ENCODE measurements at regions of chr2 and their contacts with region 1.

Region 1: DNA sequence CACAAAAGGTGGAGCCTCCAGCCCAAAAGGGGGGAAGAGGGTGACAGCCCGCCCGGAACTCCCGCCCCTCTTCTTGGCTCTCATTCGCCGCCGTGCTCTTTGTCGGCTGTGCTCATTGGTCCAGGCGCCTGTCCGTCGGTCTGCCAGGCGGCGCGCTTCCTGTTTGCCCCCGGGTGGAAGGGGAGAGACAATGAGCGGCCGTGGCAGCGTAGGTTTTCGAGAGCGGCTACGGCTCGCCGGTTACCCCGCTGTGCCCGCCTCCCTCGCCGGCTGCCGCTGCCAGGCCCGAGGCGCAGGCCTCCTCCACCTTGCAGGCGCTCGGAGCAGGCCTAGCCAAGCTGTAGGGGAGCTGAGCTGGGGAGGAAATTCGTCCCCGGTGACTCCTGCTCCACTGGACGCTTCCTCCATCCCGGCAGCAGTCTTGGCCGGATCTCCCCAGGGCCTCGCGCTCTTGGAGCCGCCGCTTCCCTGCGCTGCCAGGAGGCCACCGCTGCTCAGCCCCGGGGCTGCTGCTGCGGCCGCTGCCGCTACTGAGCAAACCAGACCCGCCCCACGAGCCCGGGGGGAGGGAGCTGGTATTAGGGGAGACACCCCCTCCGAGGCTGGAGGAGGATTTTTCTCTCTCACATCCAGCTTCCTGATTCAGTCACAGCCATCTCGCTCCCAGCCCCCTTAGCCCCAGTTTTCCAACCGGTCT is at the start of gene SP3:
- DNase-seq: peak; percentile 99
- H3K4me3 ChIP-seq: peak within 1 kb of the TSS; percentile 81 to 99 (median 97)
- H3K27ac ChIP-seq: peak within 1 kb of the TSS; percentile 99 to 100 (median 100)
- H3K4me1 ChIP-seq: peaks cover 0 to 33% (median 27%) of the 10 kb centered on the region in 4 donors
- H3K27me3 ChIP-seq: no peaks in the 10 kb centered on the region
- CTCF ChIP-seq: peak in 1 of 4 experiments; percentile 8
- EP300 ChIP-seq: peak in 1 of 4 donors; percentile 10
- POLR2A ChIP-seq: peak; percentile 80 to 95
- total RNA-seq, gene SP3: 67.9 to 120 (median 107) TPM

Region 2: DNA sequence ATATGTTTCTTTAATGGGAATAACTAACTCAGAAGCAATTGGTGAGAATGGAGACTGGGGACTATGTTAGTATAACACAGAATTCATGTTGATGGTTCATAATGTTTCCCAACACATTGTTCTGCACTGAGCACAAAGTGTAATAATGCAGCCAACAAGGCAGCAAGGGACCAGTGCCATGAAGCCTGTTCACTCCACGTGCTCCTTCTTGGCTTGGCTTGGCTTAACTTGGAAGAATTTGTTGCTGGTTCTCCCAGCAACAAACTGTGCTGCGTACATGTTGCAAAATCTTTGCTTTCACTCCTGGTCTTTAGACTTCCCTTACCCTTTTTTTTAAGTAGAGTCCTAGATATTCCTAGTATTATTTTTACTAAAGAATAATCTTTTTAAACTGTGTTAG is 760.1 kb before region 1 on chr2:
- intact Hi-C with region 1: loop called (anchors 10 kb)
- DNase-seq: peak; percentile 97
- H3K4me3 ChIP-seq: no peak overlapping the region
- H3K27ac ChIP-seq: peak overlapping the region; percentile 74 to 85 (median 80)
- H3K4me1 ChIP-seq: peaks cover 0 to 86% (median 41%) of the 10 kb centered on the region in 4 donors
- H3K27me3 ChIP-seq: no peaks in the 10 kb centered on the region
- CTCF ChIP-seq: no peak
- EP300 ChIP-seq: peak; percentile 27 to 87 (median 78)
- POLR2A ChIP-seq: no peak

Region 3: GRCh38 chr2:173997269-173997668 is 31.8 kb after region 1 on chr2:
- intact Hi-C with region 1: loop called (anchors 2 kb)
- DNase-seq: peak; percentile 96
- H3K4me3 ChIP-seq: no peak overlapping the region
- H3K27ac ChIP-seq: peak overlapping the region; percentile 29 to 75 (median 66)
- H3K4me1 ChIP-seq: peaks cover 0 to 40% (median 37%) of the 10 kb centered on the region in 4 donors
- H3K27me3 ChIP-seq: no peaks in the 10 kb centered on the region
- CTCF ChIP-seq: no peak
- EP300 ChIP-seq: peak in 1 of 4 donors; percentile 17
- POLR2A ChIP-seq: no peak

Region 4: DNA sequence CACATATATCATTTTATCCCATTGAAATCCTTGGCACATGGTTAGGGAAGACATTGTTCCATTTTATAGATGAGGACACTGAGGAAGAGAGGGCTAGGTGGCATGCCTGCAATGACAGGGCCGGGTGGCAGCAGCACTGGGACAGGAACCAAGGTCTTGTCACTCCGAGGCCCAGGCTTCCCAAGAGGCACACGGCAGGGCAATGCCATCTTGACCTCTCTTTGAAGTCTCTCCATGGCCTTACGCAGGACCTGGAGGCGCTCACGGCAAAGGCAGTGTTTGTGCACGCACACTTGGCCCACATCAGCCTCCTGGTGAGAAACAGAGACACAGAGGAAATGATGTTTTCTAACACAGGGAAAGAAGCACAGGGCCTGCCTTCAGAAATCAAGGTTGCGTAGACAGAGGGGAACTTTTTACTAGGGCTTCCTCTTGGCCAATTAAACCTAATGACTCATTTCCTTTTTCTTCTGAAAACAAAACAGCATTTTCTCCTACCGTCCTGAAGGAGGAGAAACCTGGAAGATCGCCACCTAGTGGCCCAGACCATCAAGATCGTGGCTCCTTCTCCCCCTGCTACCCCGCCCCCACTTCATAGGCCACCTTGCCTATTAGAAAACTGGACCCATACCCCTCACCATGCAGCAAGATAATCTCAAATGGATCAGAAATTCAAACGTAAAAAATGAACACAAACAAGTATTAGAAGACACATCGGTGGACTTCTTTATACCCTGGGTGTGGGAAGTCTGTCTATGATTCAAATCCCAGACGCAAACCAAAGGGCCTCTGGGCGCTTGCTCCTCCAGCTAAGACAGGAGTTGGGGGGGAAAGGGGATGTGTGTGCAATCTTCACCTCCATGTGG is 74.3 kb after region 1 on chr2:
- intact Hi-C with region 1: loop called (anchors 1 kb)
- DNase-seq: peak; percentile 95
- H3K4me3 ChIP-seq: peak overlapping the region in 3 of 4 donors; percentile 24 to 36 (median 26)
- H3K27ac ChIP-seq: peak overlapping the region; percentile 78 to 82 (median 78)
- H3K4me1 ChIP-seq: peaks cover 0 to 5% (median 4%) of the 10 kb centered on the region in 4 donors
- H3K27me3 ChIP-seq: no peaks in the 10 kb centered on the region
- CTCF ChIP-seq: peak; percentile 81 to 85 (median 82)
- EP300 ChIP-seq: peak in 1 of 4 donors; percentile 26
- POLR2A ChIP-seq: no peak

Region 5: GRCh38 chr2:174341286-174341994 is 376.0 kb after region 1 on chr2:
- intact Hi-C with region 1: loop called (anchors 10 kb)
- DNase-seq: peak; percentile 91
- H3K4me3 ChIP-seq: no peak overlapping the region
- H3K27ac ChIP-seq: no peak overlapping the region
- H3K4me1 ChIP-seq: peaks cover 0 to 49% (median 48%) of the 10 kb centered on the region in 4 donors
- H3K27me3 ChIP-seq: peaks cover 74 to 97% (median 85%) of the 10 kb centered on the region in 3 donors
- CTCF ChIP-seq: peak; percentile 71 to 96 (median 80)
- EP300 ChIP-seq: no peak
- POLR2A ChIP-seq: no peak

Region 6: GRCh38 chr2:174697255-174697654 is 731.8 kb after region 1 on chr2:
- intact Hi-C with region 1: no loop called
- DNase-seq: no peak
- H3K4me3 ChIP-seq: no peak overlapping the region
- H3K27ac ChIP-seq: no peak overlapping the region
- H3K4me1 ChIP-seq: no peaks in the 10 kb centered on the region
- H3K27me3 ChIP-seq: no peaks in the 10 kb centered on the region
- CTCF ChIP-seq: peak; percentile 26 to 61 (median 56)
- EP300 ChIP-seq: no peak
- POLR2A ChIP-seq: no peak